Mammary epithelial cell (primary cell): ENCODE measurements at regions of chr14 and their contacts with region 1.

Region 1: DNA sequence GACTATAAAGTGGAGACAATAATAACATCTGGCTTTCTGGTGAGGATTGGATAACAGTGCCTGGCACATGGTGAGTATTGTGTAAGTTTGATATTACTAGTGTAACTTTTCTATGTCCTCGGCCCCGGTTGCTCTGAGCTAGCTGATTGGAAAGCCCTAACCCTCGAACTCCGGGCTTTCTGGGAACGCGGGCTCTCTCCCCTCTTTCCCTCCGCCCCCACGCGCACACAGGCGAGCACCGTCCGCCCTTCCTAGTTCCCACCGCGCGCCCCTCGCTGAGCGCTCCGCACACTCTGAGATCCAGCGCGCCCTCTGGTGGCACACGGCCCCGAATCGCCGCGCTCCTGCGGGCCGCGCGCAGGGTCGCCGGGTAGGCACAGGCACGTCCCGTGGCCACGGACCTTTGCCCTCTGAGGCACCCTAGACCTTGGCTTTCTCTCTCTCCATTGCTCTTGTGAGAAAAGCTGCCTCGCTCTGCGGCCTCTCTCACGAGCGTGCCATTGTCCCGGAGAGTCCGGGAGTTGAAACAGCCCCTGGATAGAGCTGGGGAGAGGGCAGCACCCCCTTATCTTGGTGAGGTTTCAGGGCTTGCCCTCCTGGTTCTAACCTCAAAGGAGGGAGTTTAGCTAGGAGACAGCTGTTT is 23.2 kb upstream of the ESRRB start:
- DNase-seq: peak; percentile 21
- H3K4me3 ChIP-seq: peak overlapping the region in 2 of 3 experiments; percentile 13 to 38
- H3K27ac ChIP-seq: no peak overlapping the region
- H3K4me1 ChIP-seq: peaks cover 16% of the 10 kb centered on the region
- H3K27me3 ChIP-seq: peaks cover 3% of the 10 kb centered on the region
- CTCF ChIP-seq: peak; percentile 51 to 87

Region 2: GRCh38 chr14:75709207-75709812 is 643.5 kb before region 1 on chr14:
- CTCF ChIA-PET with region 1: no interaction called
- dilution Hi-C with region 1: no loop called
- in situ Hi-C with region 1: loop called in 1 of 2 experiments (anchors 25 kb)
- intact Hi-C with region 1: loop called (anchors 2 kb)
- DNase-seq: peak; percentile 49
- H3K4me3 ChIP-seq: no peak overlapping the region
- H3K27ac ChIP-seq: no peak overlapping the region
- H3K4me1 ChIP-seq: peaks cover 19% of the 10 kb centered on the region
- H3K27me3 ChIP-seq: no peaks in the 10 kb centered on the region
- CTCF ChIP-seq: peak; percentile 73 to 87

Region 3: GRCh38 chr14:76045773-76046172 is 307.0 kb before region 1 on chr14:
- CTCF ChIA-PET with region 1: no interaction called
- dilution Hi-C with region 1: no loop called
- in situ Hi-C with region 1: loop called in 1 of 2 experiments (anchors 10 kb)
- intact Hi-C with region 1: no loop called
- DNase-seq: no peak
- H3K4me3 ChIP-seq: no peak overlapping the region
- H3K27ac ChIP-seq: no peak overlapping the region
- H3K4me1 ChIP-seq: no peaks in the 10 kb centered on the region
- H3K27me3 ChIP-seq: no peaks in the 10 kb centered on the region
- CTCF ChIP-seq: no peak

Region 4: GRCh38 chr14:76050797-76051392 is 301.9 kb before region 1 on chr14:
- CTCF ChIA-PET with region 1: interaction called, 20 read pairs
- dilution Hi-C with region 1: no loop called
- in situ Hi-C with region 1: loop called in 1 of 2 experiments (anchors 10 kb)
- intact Hi-C with region 1: loop called (anchors 1 kb)
- DNase-seq: peak; percentile 33
- H3K4me3 ChIP-seq: no peak overlapping the region
- H3K27ac ChIP-seq: no peak overlapping the region
- H3K4me1 ChIP-seq: no peaks in the 10 kb centered on the region
- H3K27me3 ChIP-seq: no peaks in the 10 kb centered on the region
- CTCF ChIP-seq: peak; percentile 61 to 72

Region 5: DNA sequence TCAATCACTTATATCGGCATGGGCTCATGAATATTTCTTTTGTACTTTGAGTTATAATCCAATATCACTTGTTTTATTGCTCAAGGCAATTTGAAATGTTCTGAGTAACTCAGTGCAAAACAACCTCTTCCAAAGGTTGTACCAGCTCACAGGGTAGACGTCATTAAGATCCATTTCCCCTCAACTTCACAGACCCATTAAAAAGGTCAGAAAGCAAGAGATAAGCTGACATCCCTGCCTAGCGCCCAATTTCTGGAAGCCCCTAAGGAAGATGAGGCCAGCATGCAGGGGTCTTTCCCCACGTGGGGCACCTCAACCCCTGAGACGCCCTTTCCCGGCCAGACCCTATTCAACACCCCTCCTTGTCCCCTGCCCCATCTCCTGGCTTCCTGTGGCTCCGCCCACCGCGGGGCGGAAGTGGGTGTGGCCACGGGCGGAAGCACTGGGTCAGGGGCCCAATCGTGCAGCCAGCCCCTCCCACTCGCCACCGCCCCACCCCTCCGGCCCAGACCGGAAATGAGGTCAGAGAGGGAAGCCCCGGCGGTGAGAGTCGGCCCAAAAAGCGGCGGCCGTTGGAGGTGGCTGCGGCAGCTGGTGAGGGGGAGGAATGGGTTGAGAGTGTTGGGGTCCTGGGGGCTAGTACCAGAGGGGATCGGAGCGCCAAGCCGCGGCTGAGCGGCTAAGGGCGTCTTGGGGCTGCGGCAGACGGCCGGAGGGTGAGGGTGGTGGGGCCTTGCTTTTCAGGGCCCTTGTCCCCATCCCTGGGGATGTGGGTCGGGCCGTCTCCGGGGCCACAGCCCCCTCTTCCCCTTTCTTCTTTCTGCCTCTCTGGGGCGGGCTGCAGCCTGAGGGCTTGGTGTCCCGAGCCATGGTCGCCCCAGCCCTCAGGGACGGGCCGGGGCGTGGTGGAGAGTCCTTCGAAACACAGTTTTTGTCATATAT is 201.1 kb before region 1 on chr14 and contains the start of gene GPATCH2L:
- CTCF ChIA-PET with region 1: no interaction called
- dilution Hi-C with region 1: no loop called
- in situ Hi-C with region 1: no loop called
- intact Hi-C with region 1: loop called (anchors 1 kb)
- DNase-seq: peak; percentile 88
- H3K4me3 ChIP-seq: peak within 1 kb of the TSS; percentile 80 to 84 (median 82)
- H3K27ac ChIP-seq: peak within 1 kb of the TSS; percentile 86
- H3K4me1 ChIP-seq: peaks cover 28% of the 10 kb centered on the region
- H3K27me3 ChIP-seq: no peaks in the 10 kb centered on the region
- CTCF ChIP-seq: no peak
- total RNA-seq, gene GPATCH2L: 65.1 to 69.5 TPM

Region 6: DNA sequence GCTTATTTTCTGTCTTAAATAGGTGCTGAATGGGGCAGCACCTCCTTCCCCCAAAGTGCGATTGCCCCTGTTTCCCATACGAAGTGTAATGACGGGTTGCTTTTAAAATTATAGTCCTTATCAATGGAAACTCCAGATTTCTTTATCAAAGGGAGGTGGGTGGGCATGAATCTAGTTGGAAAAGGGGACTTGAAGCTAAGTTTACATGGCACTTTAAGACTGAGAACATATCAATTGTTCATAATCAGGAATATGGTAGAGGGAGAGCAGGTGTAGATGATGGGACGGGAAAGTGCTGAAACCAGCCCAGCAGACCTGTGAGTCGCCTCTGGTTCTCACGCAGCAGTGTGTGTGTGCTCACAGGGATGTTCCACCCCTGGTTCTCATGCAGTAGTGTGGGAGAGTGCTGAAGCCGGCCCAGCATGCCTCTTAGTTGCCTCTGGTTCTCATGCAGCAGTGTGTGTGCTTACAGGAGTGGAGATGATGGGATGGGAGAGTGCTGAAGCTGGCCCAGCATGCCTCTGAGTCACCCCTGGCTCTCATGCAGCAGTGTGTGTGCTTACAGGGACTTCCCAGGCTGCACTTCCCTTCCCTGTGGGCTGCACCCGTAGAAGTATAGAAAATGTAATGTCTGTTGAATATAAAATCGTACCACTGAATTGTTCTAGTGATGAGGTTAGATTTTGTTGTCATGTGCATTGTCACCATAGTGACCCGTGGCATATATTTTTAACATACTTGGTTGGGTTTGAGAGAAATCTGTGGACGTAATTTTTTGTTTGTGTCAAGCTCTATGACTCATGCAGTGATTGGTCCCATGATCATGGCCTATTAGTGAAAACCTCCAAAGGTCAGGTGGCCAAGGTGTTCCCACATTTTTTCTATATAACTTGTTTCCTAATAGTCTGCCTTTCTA is 149.4 kb before region 1 on chr14:
- CTCF ChIA-PET with region 1: no interaction called
- dilution Hi-C with region 1: no loop called
- in situ Hi-C with region 1: no loop called
- intact Hi-C with region 1: loop called (anchors 10 kb)
- DNase-seq: peak; percentile 85
- H3K4me3 ChIP-seq: no peak overlapping the region
- H3K27ac ChIP-seq: peak overlapping the region; percentile 47
- H3K4me1 ChIP-seq: peaks cover 28% of the 10 kb centered on the region
- H3K27me3 ChIP-seq: no peaks in the 10 kb centered on the region
- CTCF ChIP-seq: no peak

Region 7: GRCh38 chr14:76595266-76595665 is 242.5 kb after region 1 on chr14:
- CTCF ChIA-PET with region 1: no interaction called
- dilution Hi-C with region 1: no loop called
- in situ Hi-C with region 1: no loop called
- intact Hi-C with region 1: no loop called
- DNase-seq: no peak
- H3K4me3 ChIP-seq: no peak overlapping the region
- H3K27ac ChIP-seq: no peak overlapping the region
- H3K4me1 ChIP-seq: no peaks in the 10 kb centered on the region
- H3K27me3 ChIP-seq: no peaks in the 10 kb centered on the region
- CTCF ChIP-seq: no peak